H1 (cell line): ENCODE measurements at regions of chr13 and their contacts with region 1.

Region 1: DNA sequence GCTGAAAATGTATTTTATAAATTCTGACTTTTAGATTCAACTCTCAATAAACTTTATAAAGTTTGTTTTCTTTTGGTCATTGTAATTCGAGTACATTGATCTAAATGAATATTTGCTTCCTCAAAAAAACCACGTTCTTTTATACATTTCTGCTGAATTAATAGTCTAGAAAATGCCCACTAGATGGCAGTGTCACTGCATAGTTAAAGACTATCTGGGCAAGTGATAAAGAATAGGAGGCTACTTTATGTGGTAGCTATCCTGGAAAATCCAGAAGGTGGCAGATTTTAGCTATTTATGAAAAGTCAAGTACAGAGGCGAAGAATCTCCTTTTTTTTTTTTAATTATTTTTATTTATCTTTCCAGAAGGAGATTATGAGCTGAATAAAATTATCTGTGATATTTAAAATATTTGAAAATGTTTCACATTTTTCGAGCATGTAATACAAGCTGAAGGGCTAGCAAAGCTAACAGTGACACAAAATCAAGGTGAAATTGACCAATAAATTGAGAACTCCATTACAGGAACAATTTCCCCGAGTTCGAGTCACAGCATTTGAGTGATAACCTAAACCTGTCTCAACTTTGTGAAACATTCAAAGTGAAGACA is 221.8 kb downstream of the OLFM4 start:
- DNase-seq: no peak
- H3K4me3 ChIP-seq: no peak overlapping the region
- H3K27ac ChIP-seq: no peak overlapping the region
- H3K4me1 ChIP-seq: no peaks in the 10 kb centered on the region
- H3K27me3 ChIP-seq: no peaks in the 10 kb centered on the region; a peak in 1 of 7 replicates
- CTCF ChIP-seq: peak in 2 of 3 experiments; percentile 76 to 95; a peak in 3 of 4 replicates
- EP300 ChIP-seq: no peak
- POLR2A ChIP-seq: no peak
- RAD21 ChIP-seq: peak; percentile 97 to 98

Region 2: GRCh38 chr13:52994865-52995264 is 255.5 kb before region 1 on chr13:
- CTCF ChIA-PET with region 1: no interaction called
- POLR2A ChIA-PET with region 1: no interaction called
- DNase-seq: no peak
- H3K4me3 ChIP-seq: no peak overlapping the region
- H3K27ac ChIP-seq: no peak overlapping the region
- H3K4me1 ChIP-seq: peaks cover 0 to 19% (median 7%) of the 10 kb centered on the region in 4 experiments; a peak in 5 of 7 replicates
- H3K27me3 ChIP-seq: no peaks in the 10 kb centered on the region
- CTCF ChIP-seq: no peak
- EP300 ChIP-seq: no peak
- POLR2A ChIP-seq: no peak
- RAD21 ChIP-seq: no peak

Region 3: GRCh38 chr13:53068585-53069520 is 181.5 kb before region 1 on chr13:
- CTCF ChIA-PET with region 1: no interaction called
- POLR2A ChIA-PET with region 1: no interaction called
- DNase-seq: no peak
- H3K4me3 ChIP-seq: no peak overlapping the region
- H3K27ac ChIP-seq: no peak overlapping the region
- H3K4me1 ChIP-seq: no peaks in the 10 kb centered on the region
- H3K27me3 ChIP-seq: no peaks in the 10 kb centered on the region
- CTCF ChIP-seq: no peak
- EP300 ChIP-seq: no peak
- POLR2A ChIP-seq: no peak
- RAD21 ChIP-seq: peak in 1 of 2 experiments; percentile 18; a peak in 3 of 4 replicates

Region 4: DNA sequence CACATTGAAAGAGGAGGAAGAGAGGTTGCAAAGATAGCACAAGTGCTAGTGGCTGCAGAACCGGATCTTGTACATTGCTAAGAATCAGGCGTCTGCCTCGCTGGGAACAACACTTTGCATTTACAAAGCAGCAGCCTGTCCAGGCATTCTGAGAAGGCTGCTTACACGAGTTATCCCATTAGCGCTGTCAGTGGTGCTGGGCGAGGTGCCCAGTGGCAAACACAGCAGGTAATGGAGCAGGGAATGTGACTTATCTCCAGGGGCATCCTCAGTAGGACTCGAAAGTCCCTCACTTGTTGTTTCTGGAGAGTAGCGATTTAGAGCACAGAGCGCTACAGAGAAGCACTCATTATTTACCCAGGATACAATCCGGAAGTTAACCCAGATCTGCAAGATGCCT is 12.1 kb before region 1 on chr13:
- CTCF ChIA-PET with region 1: interaction called, 12 read pairs
- POLR2A ChIA-PET with region 1: no interaction called
- DNase-seq: no peak
- H3K4me3 ChIP-seq: no peak overlapping the region
- H3K27ac ChIP-seq: no peak overlapping the region
- H3K4me1 ChIP-seq: peaks cover 0 to 8% (median 0%) of the 10 kb centered on the region in 4 experiments; a peak in 3 of 7 replicates
- H3K27me3 ChIP-seq: peaks cover 0 to 1% (median 0%) of the 10 kb centered on the region in 4 experiments; a peak in 1 of 7 replicates
- CTCF ChIP-seq: no peak
- EP300 ChIP-seq: no peak
- POLR2A ChIP-seq: no peak
- RAD21 ChIP-seq: no peak

Region 5: GRCh38 chr13:53285896-53286430 is 35.6 kb after region 1 on chr13:
- CTCF ChIA-PET with region 1: interaction called, 12 read pairs
- POLR2A ChIA-PET with region 1: no interaction called
- DNase-seq: no peak
- H3K4me3 ChIP-seq: no peak overlapping the region
- H3K27ac ChIP-seq: no peak overlapping the region
- H3K4me1 ChIP-seq: no peaks in the 10 kb centered on the region
- H3K27me3 ChIP-seq: peaks cover 12 to 37% (median 22%) of the 10 kb centered on the region in 4 experiments
- CTCF ChIP-seq: no peak
- EP300 ChIP-seq: no peak
- POLR2A ChIP-seq: no peak
- RAD21 ChIP-seq: no peak

Region 6: DNA sequence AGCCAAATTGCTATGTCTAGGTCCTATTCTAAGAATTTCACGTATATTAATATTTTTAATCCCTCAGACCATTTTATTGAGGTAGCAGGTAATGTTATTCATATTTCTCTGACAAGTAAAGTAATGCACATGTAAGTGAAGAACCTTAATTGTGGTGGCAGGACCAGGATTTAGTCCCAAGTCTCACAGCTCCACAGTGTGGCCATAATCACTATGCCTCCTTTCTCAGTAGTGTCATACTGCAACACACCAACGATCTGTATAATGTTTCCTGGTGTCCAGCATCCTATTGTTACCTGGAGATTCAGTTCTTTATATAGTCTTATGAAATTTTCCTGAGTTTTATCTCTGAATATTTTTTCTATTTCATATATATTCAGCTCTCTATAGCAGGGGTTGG is 118.6 kb after region 1 on chr13:
- CTCF ChIA-PET with region 1: interaction called, 43 read pairs
- POLR2A ChIA-PET with region 1: no interaction called
- DNase-seq: no peak
- H3K4me3 ChIP-seq: no peak overlapping the region
- H3K27ac ChIP-seq: no peak overlapping the region
- H3K4me1 ChIP-seq: peaks cover 0 to 4% (median 2%) of the 10 kb centered on the region in 4 experiments; a peak in 2 of 7 replicates
- H3K27me3 ChIP-seq: no peaks in the 10 kb centered on the region
- CTCF ChIP-seq: peak in 2 of 3 experiments; percentile 41 to 46; a peak in 2 of 4 replicates
- EP300 ChIP-seq: no peak
- POLR2A ChIP-seq: no peak
- RAD21 ChIP-seq: peak; percentile 67 to 76

Region 7: DNA sequence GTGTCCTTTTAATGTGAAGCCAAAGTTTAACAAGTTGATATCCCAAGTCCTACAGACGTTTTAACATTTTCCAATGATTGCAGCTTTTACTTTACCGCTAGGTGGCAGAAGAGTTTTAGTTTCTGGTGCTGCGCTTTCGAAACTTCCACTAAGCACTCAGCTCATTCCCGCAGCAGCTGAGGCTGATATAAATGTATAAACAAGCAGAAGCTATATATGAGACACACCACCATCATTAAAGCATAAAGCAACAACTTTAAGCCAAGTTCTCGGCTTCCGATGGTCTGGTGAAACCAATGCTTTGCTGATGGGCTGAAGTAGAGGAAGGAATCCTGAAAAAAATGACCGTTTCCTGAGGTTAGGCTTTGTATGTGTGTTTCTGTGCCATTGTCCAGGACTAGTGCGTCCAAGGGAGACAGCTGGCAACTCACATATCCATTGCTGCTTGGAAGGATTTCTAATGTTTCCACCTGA is 532.2 kb after region 1 on chr13:
- CTCF ChIA-PET with region 1: interaction called, 28 read pairs
- POLR2A ChIA-PET with region 1: no interaction called
- DNase-seq: peak in 1 of 2 experiments; percentile 47
- H3K4me3 ChIP-seq: peak overlapping the region in 1 of 4 experiments; percentile 19; a peak in 1 of 8 replicates
- H3K27ac ChIP-seq: no peak overlapping the region
- H3K4me1 ChIP-seq: peaks cover 0 to 3% (median 1%) of the 10 kb centered on the region in 4 experiments; a peak in 5 of 7 replicates
- H3K27me3 ChIP-seq: no peaks in the 10 kb centered on the region; a peak in 1 of 7 replicates
- CTCF ChIP-seq: peak in 2 of 3 experiments; percentile 71 to 74; a peak in 3 of 4 replicates
- EP300 ChIP-seq: no peak
- POLR2A ChIP-seq: no peak
- RAD21 ChIP-seq: peak; percentile 89 to 92